Activated CD8-positive, alpha-beta T cell treated with anti-CD3 and anti-CD28 coated beads for 36 hours (primary cell): ENCODE measurements at regions of chr5 and their contacts with region 1.

Region 1: DNA sequence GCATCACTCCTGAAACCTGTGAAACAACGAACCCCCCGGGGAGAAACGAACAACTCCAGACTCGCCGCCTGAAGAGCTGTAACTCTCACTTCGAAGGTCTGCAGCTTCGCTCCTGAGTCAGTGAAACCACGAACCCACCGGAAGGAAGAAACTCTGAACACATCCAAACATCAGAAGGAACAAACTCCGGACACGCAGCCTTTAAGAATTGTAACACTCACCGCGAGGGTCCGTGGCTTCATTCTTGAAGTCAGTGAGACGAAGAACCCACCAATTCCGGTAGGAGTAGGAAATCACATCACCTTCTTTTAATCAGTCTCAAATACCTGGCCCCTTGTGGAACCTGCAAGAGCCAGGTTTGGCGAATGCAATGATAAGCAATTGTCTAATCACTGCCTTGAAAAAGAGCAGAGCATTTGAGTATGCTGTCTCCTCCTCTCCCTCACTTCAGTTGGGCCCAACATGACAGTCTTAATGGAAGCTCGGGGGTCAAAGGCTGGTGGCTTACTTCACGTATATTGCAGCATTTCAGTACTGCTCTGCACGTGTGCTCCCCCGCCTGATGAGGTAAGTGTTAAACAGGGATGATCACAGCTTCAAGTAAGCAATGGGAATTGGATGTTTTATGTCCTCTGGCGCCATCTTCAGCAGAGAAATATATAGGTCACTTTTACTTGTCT is 473 bp downstream of the IRGM start:
- DNase-seq: peak; percentile 85
- ATAC-seq: peak; percentile 93
- H3K4me3 Mint-ChIP-seq: peak overlapping the region; percentile 76
- H3K27ac Mint-ChIP-seq: peak overlapping the region; percentile 85
- H3K4me1 Mint-ChIP-seq: peaks cover 19% of the 10 kb centered on the region
- H3K27me3 Mint-ChIP-seq: no peaks in the 10 kb centered on the region
- CTCF ChIP-seq: peak; percentile 71

Region 2: GRCh38 chr5:150458819-150459557 is 387.8 kb before region 1 on chr5:
- CTCF ChIA-PET with region 1: interaction called, 6 read pairs
- POLR2A ChIA-PET with region 1: interaction called, 3 read pairs
- intact Hi-C with region 1: loop called (anchors 5 kb)
- DNase-seq: peak; percentile 88
- ATAC-seq: peak; percentile 92
- H3K4me3 Mint-ChIP-seq: no peak overlapping the region
- H3K27ac Mint-ChIP-seq: no peak overlapping the region
- H3K4me1 Mint-ChIP-seq: peaks cover 34% of the 10 kb centered on the region
- H3K27me3 Mint-ChIP-seq: no peaks in the 10 kb centered on the region
- CTCF ChIP-seq: peak; percentile 80

Region 3: GRCh38 chr5:150700594-150701293 is 146.1 kb before region 1 on chr5 and contains the start of gene RBM22:
- CTCF ChIA-PET with region 1: interaction called, 34 read pairs
- POLR2A ChIA-PET with region 1: interaction called, 19 read pairs
- intact Hi-C with region 1: no loop called
- DNase-seq: peak; percentile 96
- ATAC-seq: peak; percentile 96
- H3K4me3 Mint-ChIP-seq: no peak within 1 kb of the TSS
- H3K27ac Mint-ChIP-seq: no peak within 1 kb of the TSS
- H3K4me1 Mint-ChIP-seq: peaks cover 16% of the 10 kb centered on the region
- H3K27me3 Mint-ChIP-seq: no peaks in the 10 kb centered on the region
- CTCF ChIP-seq: peak; percentile 79
- total RNA-seq, gene RBM22: 53.1 to 59.7 TPM

Region 4: GRCh38 chr5:150778517-150779396 is 68.0 kb before region 1 on chr5 and contains the start of gene SMIM3:
- CTCF ChIA-PET with region 1: interaction called, 29 read pairs
- POLR2A ChIA-PET with region 1: interaction called, 6 read pairs
- intact Hi-C with region 1: no loop called
- DNase-seq: peak; percentile 81
- ATAC-seq: peak; percentile 63
- H3K4me3 Mint-ChIP-seq: peak within 1 kb of the TSS; percentile 99
- H3K27ac Mint-ChIP-seq: peak within 1 kb of the TSS; percentile 93
- H3K4me1 Mint-ChIP-seq: peaks cover 53% of the 10 kb centered on the region
- H3K27me3 Mint-ChIP-seq: no peaks in the 10 kb centered on the region
- CTCF ChIP-seq: peak; percentile 42
- total RNA-seq, gene SMIM3: 8.6 to 8.8 TPM

Region 5: GRCh38 chr5:150801117-150801927 is 45.5 kb before region 1 on chr5:
- CTCF ChIA-PET with region 1: interaction called, 63 read pairs
- POLR2A ChIA-PET with region 1: interaction called, 5 read pairs
- intact Hi-C with region 1: loop called (anchors 2 kb)
- DNase-seq: no peak
- ATAC-seq: peak; percentile 64
- H3K4me3 Mint-ChIP-seq: no peak overlapping the region
- H3K27ac Mint-ChIP-seq: no peak overlapping the region
- H3K4me1 Mint-ChIP-seq: peaks cover 15% of the 10 kb centered on the region
- H3K27me3 Mint-ChIP-seq: peaks cover 2% of the 10 kb centered on the region
- CTCF ChIP-seq: peak; percentile 81

Region 6: GRCh38 chr5:150816946-150817345 is 29.8 kb before region 1 on chr5:
- CTCF ChIA-PET with region 1: no interaction called
- POLR2A ChIA-PET with region 1: no interaction called
- intact Hi-C with region 1: no loop called
- DNase-seq: no peak
- ATAC-seq: no peak
- H3K4me3 Mint-ChIP-seq: no peak overlapping the region
- H3K27ac Mint-ChIP-seq: no peak overlapping the region
- H3K4me1 Mint-ChIP-seq: no peaks in the 10 kb centered on the region
- H3K27me3 Mint-ChIP-seq: no peaks in the 10 kb centered on the region
- CTCF ChIP-seq: no peak

Region 7: DNA sequence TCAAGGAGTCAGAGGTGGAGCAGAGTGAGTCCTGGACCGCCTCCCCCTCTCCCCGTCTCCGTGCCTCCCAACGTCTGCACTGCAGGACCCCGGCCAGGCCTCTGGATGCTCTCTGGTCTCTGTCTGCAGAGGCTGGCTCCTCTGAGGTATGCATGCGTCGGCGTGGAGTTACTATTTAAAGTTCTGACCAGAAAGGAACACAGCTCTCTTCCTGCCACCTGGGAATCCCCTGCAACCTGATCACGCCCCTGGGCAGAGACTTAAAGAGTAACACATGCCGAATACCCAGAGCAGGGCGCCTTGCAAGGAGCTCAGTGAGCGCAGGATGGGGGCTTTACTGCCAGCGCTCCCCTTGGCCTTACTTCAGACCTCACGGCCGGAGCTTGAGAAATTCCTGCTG is 294.7 kb after region 1 on chr5:
- CTCF ChIA-PET with region 1: no interaction called
- POLR2A ChIA-PET with region 1: no interaction called
- intact Hi-C with region 1: no loop called
- DNase-seq: peak; percentile 90
- ATAC-seq: peak; percentile 91
- H3K4me3 Mint-ChIP-seq: peak overlapping the region; percentile 73
- H3K27ac Mint-ChIP-seq: peak overlapping the region; percentile 86
- H3K4me1 Mint-ChIP-seq: peaks cover 88% of the 10 kb centered on the region
- H3K27me3 Mint-ChIP-seq: no peaks in the 10 kb centered on the region
- CTCF ChIP-seq: no peak

Region 8: GRCh38 chr5:151239237-151239861 is 392.6 kb after region 1 on chr5:
- CTCF ChIA-PET with region 1: no interaction called
- POLR2A ChIA-PET with region 1: no interaction called
- intact Hi-C with region 1: no loop called
- DNase-seq: peak; percentile 78
- ATAC-seq: peak; percentile 85
- H3K4me3 Mint-ChIP-seq: peak overlapping the region; percentile 21
- H3K27ac Mint-ChIP-seq: peak overlapping the region; percentile 13
- H3K4me1 Mint-ChIP-seq: peaks cover 37% of the 10 kb centered on the region
- H3K27me3 Mint-ChIP-seq: no peaks in the 10 kb centered on the region
- CTCF ChIP-seq: peak; percentile 98